Activated naive CD4-positive, alpha-beta T cell treated with anti-CD3 and anti-CD28 coated beads for 36 hours (primary cell): ENCODE measurements at regions of chr6 and their contacts with region 1.

Region 1: DNA sequence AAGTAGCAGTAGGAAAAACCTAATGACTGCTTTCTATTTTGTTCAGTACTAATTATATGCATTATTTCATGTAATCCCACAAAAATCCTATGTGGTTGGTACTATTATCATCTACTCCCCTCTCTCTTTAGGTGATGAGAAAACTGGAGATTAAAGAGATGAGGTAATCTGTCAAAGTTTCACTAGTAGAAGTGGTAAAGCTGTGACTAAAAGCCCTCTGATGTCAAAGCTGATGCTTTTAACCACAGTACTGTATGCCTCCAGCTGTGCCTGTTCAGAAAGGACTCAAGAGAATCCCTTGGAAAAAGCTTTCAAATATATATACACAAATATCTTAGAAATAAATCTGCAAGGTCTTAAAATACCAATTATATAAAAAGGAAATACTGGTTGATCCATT is 38.0 kb downstream of the PHIP start:
- DNase-seq: peak; percentile 33
- H3K4me3 Mint-ChIP-seq: no peak overlapping the region
- H3K27ac Mint-ChIP-seq: no peak overlapping the region
- H3K4me1 Mint-ChIP-seq: peaks cover 51% of the 10 kb centered on the region
- H3K27me3 Mint-ChIP-seq: no peaks in the 10 kb centered on the region

Region 2: DNA sequence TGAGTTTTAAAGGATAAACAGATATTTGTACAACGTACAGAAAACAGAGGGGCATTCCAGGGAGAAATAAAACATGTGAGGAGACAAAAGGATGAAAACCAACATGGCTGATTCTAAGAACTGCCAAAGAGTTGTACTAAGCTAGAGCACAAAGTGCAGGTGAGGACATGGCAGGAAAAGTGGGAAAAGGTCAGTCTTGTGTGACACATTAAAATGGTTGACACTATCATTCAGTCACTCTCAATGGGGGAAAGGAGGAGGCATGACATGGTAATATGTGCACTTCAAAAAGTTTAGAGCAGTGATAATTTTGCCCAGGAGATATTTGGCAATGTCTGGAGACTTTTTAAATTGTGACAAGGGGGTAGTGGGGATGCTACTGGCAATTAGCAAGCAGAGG is 16.1 kb after region 1 on chr6:
- CTCF ChIA-PET with region 1: no interaction called
- intact Hi-C with region 1: no loop called
- DNase-seq: no peak
- H3K4me3 Mint-ChIP-seq: no peak overlapping the region
- H3K27ac Mint-ChIP-seq: no peak overlapping the region
- H3K4me1 Mint-ChIP-seq: peaks cover 15% of the 10 kb centered on the region
- H3K27me3 Mint-ChIP-seq: no peaks in the 10 kb centered on the region

Region 3: GRCh38 chr6:79084693-79085092 is 44.6 kb after region 1 on chr6:
- CTCF ChIA-PET with region 1: no interaction called
- intact Hi-C with region 1: no loop called
- DNase-seq: no peak
- H3K4me3 Mint-ChIP-seq: no peak overlapping the region
- H3K27ac Mint-ChIP-seq: no peak overlapping the region
- H3K4me1 Mint-ChIP-seq: peaks cover 5% of the 10 kb centered on the region
- H3K27me3 Mint-ChIP-seq: peaks cover 28% of the 10 kb centered on the region

Region 4: GRCh38 chr6:79335133-79335674 is 295.1 kb after region 1 on chr6:
- CTCF ChIA-PET with region 1: no interaction called
- intact Hi-C with region 1: loop called (anchors 1 kb)
- DNase-seq: no peak
- H3K4me3 Mint-ChIP-seq: no peak overlapping the region
- H3K27ac Mint-ChIP-seq: no peak overlapping the region
- H3K4me1 Mint-ChIP-seq: peaks cover 6% of the 10 kb centered on the region
- H3K27me3 Mint-ChIP-seq: peaks cover 11% of the 10 kb centered on the region